ENCODE measurements at regions of chr17 and their contacts with region 1.

Region 1: GRCh38 chr17:63611354-63611753 is 10.7 kb downstream of the TACO1 start:
- DNase-seq: peak; percentile 56
- H3K4me3 Mint-ChIP-seq: peak overlapping the region; percentile 62
- H3K27ac Mint-ChIP-seq: peak overlapping the region; percentile 99
- H3K4me1 Mint-ChIP-seq: peaks cover 34% of the 10 kb centered on the region
- H3K27me3 Mint-ChIP-seq: peaks cover 5% of the 10 kb centered on the region

Region 2: DNA sequence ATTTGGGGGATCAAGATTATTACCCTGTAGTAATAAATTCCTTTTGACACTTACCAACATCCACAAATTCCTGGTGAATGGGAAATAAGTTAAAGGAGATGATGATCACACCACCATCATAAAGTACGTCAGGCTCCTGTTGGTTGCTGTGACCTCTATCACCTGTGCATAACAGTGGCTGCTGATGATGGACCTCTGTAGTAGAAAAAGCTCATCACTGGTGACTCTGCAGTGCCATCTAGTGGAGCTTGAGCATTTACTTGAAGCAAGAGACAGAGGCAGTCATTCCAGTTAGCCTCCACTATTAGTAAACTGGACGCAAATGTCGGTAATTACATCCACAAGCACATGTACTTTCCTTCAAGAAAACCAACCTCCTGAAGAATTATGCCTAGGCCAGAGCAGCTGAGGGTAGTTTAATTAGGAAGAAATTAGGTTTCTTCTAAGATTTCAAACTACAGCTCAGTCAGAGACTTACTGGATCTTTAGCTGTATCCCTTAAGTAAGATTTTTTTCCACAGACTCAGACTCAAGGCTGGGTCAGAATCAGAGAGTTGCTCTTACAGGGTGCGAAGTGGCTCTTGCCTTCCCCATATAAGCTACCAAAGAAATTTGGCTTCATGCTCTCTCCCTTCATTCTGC is 204.5 kb before region 1 on chr17:
- CTCF ChIA-PET with region 1: interaction called, 18 read pairs
- DNase-seq: peak; percentile 80
- H3K4me3 Mint-ChIP-seq: no peak overlapping the region
- H3K27ac Mint-ChIP-seq: no peak overlapping the region
- H3K4me1 Mint-ChIP-seq: peaks cover 5% of the 10 kb centered on the region
- H3K27me3 Mint-ChIP-seq: no peaks in the 10 kb centered on the region

Region 3: DNA sequence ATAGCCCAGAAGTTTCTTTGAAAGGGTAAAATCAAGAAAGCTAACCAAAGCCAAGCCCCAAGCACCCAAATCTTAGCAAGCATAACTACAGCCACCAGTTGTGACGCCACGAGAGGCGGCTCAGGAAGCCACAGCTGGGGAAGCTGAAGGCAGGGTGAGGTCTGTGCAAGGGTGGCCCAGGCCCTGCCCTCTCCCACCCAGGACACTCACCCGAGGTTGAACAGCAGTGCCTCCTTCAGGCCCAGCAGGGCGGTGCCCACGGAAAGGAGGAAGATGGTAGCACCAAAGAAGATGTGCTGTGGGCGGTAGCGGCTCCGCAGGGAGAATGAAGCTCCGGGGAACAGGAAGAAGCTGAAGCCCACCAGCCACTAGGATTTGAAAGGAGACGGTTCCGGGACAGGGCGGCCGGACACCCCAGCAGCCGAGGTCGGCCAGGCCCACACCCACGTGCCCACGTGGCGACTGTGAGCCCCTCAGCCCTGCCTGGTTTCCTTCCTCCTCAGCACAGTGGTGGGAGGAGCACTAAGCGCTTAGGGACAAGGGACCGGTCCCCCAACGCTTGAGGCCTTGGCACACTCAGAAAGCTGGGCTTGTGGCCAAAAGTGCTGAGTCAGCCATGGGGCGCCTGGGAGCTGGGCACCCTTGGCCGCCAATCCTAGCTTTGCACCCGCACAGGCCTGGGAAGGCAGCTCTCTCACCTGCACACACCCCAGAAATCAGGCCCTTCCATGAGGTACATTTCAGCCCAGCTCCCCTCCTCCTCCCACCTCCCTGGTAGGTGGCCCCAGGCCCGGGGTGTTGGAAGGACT is 176.3 kb before region 1 on chr17:
- CTCF ChIA-PET with region 1: interaction called, 273 read pairs
- DNase-seq: peak; percentile 77
- H3K4me3 Mint-ChIP-seq: no peak overlapping the region
- H3K27ac Mint-ChIP-seq: peak overlapping the region; percentile 86
- H3K4me1 Mint-ChIP-seq: peaks cover 52% of the 10 kb centered on the region
- H3K27me3 Mint-ChIP-seq: peaks cover 3% of the 10 kb centered on the region

Region 4: DNA sequence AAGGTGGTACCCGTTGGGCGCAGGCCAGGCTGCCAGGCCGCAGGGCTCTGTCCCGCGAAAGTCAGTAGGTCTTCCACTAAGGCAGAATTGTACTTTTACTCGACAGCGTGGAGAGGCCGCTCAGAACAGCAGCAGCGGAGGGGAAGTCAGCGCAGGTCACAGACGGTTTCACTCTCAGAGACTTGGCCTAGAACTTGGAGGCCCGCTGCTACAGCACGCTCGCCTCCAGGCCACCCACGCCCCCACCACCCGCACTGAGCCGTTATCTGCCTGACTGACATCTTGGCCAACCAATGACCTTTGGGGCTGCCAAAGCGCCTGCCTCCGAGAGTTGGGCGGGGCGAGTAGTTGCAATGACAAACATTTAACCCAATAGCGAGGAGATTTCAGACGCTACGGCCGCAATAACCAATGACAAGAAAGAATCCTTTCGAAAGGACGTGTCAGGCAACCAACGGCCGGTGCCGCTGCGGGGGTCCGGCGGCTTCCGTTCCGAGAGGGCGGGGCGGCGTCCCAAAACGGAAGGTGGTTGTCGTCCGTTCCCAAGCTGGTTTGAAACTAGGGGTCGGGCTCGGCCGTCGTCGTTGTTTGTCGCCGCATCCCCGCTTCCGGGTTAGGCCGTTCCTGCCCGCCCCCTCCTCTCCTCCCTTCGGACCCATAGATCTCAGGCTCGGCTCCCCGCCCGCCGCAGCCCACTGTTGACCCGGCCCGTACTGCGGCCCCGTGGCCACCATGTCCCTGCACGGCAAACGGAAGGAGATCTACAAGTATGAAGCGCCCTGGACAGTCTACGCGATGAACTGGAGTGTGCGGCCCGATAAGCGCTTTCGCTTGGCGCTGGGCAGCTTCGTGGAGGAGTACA is 61.2 kb before region 1 on chr17 and contains the start of gene DCAF7:
- CTCF ChIA-PET with region 1: interaction called, 11 read pairs
- DNase-seq: peak; percentile 100
- H3K4me3 Mint-ChIP-seq: peak within 1 kb of the TSS; percentile 95
- H3K27ac Mint-ChIP-seq: peak within 1 kb of the TSS; percentile 97
- H3K4me1 Mint-ChIP-seq: peaks cover 45% of the 10 kb centered on the region
- H3K27me3 Mint-ChIP-seq: peaks cover 4% of the 10 kb centered on the region

Region 5: DNA sequence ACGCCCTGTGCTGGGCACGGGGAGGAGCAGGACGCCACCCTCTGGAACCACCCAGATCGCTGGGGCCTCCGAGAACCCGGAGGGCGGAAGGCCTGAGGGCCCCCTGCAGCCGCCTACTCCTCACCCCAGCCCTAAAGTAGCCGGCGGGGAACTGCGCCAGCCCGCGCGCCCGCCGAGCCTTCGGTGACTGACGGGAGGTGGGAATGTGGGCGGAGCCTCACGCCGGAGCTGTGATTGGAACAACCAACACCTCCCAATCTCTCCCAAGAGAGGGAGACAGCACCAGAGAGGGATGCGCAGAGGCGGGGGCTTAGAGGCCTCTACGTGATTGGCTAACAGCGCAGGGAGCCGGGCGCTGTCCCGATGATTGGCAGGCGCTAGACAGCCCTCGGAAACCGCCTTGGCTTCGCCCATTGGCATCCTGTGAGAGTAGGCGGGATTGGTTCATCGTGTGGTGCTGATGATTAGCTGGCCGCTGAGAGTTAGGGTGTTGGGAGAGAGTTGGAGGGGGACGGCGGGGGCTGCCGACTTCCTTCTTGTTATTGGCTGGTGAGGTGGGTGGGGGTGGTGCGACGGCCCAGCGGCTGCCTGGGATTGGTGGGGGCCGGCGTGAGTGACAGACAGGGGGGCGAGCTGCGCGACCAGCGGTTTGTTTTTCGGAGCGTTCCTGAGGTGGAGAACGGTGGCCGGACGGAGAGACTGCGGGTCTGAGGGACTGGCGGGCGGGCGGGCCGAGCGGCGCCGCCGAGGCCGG is 10.6 kb after region 1 on chr17 and contains the start of gene MAP3K3:
- CTCF ChIA-PET with region 1: interaction called, 29 read pairs
- DNase-seq: peak; percentile 99
- H3K4me3 Mint-ChIP-seq: peak within 1 kb of the TSS; percentile 97
- H3K27ac Mint-ChIP-seq: peak within 1 kb of the TSS; percentile 94
- H3K4me1 Mint-ChIP-seq: peaks cover 31% of the 10 kb centered on the region
- H3K27me3 Mint-ChIP-seq: peaks cover 20% of the 10 kb centered on the region